ENCODE measurements at regions of chr20 and their contacts with region 1.

Region 1: DNA sequence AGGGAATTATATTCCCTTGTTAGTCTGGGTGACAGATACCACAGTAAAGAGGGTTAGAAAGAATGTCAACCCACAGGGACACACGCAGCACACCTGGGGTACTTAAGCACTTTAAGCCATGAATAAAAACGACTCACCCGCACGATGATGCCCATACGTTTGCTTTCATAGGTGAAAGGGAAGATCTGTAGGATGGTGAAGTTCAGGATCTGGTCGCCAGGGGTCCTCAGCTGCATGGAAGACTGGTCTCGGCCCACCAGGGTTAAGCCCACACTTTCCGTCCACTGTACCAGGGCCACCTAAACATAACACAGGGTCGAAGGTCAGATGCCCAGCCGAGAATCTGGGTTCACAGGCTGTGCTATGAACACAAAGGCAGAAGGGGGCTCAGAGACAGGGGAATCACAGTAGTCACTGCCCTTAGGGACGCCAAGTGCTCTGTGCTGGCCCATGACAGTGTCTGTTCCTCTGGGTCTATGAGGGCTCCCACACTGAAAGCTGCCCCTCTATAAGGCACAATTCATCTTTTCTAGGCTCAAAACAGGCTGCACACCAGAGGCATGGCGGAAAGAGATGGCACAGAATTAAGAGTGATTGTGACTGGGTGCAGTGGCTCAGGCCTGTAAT is 96.8 kb upstream of the NFATC2 start:
- DNase-seq: no peak
- H3K4me3 Mint-ChIP-seq: no peak overlapping the region
- H3K27ac Mint-ChIP-seq: no peak overlapping the region
- H3K4me1 Mint-ChIP-seq: no peaks in the 10 kb centered on the region
- H3K27me3 Mint-ChIP-seq: peaks cover 4% of the 10 kb centered on the region

Region 2: DNA sequence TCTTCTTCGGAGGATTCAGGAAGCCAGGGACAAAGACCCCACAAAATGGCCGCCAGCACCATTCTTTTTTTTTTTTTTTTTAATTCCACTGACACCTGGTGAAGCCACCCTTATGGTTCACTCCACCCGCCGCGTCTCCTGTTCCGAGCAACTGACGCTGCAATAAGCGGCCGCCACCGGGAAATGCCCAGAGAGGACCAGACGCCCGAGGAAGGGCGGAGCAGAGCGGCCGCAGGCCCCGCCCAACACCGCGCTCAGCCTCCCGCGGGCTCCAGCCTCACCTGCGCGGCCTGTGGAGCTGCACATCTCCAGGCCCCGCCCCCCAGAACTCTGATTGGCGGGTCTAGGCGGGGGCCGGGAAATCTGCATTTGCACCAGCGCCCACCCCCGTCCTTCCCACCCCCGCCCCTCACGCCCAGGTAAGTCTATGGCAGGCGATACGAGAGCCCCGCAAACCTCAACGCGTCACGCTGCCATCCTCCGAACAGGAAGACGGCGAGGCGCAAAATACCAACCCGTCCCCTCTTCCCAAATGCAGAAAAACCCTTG is 127.8 kb after region 1 on chr20:
- intact Hi-C with region 1: loop called (anchors 10 kb)
- DNase-seq: peak; percentile 60
- H3K4me3 Mint-ChIP-seq: peak overlapping the region; percentile 69
- H3K27ac Mint-ChIP-seq: no peak overlapping the region
- H3K4me1 Mint-ChIP-seq: peaks cover 9% of the 10 kb centered on the region
- H3K27me3 Mint-ChIP-seq: peaks cover 27% of the 10 kb centered on the region

Region 3: DNA sequence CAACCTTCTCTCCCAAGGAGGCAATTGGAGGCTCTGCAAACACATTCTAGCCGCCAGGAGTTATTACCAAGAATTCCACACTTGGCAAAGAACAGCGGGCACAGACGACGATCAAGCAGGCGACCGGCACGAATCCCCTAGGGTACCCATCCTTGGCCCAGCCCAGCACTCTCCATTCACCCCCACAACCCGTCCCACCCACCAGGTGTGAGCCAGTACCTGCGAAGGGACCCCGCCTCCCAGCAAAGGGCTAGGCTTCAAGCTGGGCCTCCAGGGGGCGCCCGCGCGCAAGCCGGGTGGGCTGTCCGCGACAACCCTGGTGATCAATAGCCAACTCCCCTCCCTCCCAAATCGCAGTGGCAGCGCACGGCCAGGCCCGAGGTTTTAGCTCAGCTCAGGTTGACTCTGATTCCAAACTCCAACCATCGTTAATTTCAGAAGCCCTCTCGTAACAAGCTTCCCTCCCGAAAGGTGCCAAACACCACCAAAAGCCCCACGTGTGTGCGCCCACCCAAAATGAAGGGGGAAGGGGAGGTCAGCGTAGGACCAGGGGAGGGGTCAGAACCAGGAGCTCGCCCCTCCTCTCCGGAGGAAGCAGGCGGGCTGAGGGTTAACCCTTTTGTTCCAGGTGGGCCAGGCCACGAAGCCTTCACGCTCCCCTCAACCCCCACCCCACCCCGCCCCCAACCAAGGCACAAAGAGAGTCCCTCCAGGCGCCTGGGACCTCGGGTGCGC is 160.9 kb after region 1 on chr20:
- intact Hi-C with region 1: loop called (anchors 2 kb)
- DNase-seq: peak; percentile 38
- H3K4me3 Mint-ChIP-seq: peak overlapping the region; percentile 74
- H3K27ac Mint-ChIP-seq: peak overlapping the region; percentile 44
- H3K4me1 Mint-ChIP-seq: peaks cover 3% of the 10 kb centered on the region
- H3K27me3 Mint-ChIP-seq: peaks cover 72% of the 10 kb centered on the region

Region 4: DNA sequence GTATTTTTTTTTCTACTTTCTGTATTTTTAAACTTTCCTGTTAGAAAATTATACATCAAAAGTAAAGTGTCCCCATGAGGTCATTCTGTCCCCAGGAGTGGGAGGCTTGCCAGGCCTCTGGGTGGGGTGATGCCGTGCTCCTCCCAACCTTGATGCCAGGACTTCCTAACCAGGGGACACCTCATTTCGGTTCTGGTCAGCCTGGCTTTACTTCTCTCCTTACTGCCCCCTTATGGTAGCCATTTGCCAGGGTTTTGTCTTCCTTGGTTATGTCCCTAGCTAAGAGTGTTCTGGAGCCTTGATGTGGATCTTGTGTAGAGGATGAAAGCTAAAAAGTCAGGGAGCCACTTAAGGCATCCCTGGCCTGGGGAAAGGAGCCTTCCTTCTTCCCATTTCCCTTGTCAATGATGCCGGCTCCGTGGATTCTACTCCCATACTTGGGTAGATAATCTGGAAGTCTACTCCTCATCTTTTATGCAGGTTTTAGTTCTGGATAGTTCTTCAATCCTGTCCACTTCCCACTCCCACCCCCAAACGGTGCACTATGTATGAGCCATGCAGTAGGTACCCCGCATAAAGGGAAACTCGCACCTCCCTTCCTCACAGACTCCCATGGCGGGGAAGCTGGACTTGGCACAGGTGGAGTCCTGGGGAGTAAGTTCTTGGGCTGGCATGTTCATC is 327.1 kb after region 1 on chr20:
- intact Hi-C with region 1: loop called (anchors 1 kb)
- DNase-seq: no peak
- H3K4me3 Mint-ChIP-seq: no peak overlapping the region
- H3K27ac Mint-ChIP-seq: no peak overlapping the region
- H3K4me1 Mint-ChIP-seq: no peaks in the 10 kb centered on the region
- H3K27me3 Mint-ChIP-seq: peaks cover 7% of the 10 kb centered on the region

Region 5: DNA sequence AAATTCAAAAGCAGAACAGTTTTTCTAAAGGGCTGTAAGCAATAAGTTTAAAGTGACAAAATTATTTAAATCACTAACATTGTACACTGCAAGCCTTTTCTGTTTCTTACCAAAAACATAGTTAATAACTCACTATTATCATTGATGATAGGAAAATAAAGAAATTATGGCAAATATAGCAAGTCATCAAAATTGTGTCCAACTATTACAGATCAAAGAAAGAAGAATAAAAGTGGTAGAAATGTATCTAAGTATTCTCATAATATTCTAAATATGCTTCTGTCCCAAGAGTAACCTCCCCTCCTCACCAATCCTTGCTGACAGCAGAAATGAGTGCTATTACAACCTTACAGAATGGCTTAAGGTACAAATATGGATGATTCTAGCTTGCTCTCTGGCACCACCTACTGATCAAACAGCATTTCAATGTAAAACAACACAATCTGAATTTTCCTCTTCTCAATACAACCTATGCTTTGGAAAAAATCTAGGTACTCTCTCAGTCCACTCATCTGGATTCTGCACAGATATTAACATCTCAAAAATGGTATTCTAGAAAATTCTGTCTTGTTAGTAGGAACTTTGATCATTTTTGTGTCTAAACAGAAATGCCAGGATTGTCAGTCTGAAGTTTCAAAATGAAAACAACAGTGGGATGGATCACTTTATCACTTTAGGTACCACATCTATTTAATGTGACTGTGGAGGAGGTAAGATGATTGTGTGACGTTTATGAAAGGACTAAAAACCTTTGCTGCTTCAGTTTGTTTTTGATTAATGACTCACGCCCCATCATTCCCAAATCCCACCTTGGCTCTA is 511.3 kb after region 1 on chr20:
- intact Hi-C with region 1: loop called (anchors 2 kb)
- DNase-seq: no peak
- H3K4me3 Mint-ChIP-seq: no peak overlapping the region
- H3K27ac Mint-ChIP-seq: no peak overlapping the region
- H3K4me1 Mint-ChIP-seq: no peaks in the 10 kb centered on the region
- H3K27me3 Mint-ChIP-seq: no peaks in the 10 kb centered on the region

Measured in activated T-helper 1 cell treated with anti-CD3 and anti-CD28 coated beads, Interleukin-12 subunit alpha, Interleukin-12 subunit beta, Interleukin-2, Interleukin-4 antibody, amounts not matched to agents 30 ng/mL and 10 ng/mL and 1 ng/mL, durations not matched to agents 14 hours and 24 hours and 36 hours (primary cell).